Activated CD4-positive, alpha-beta memory T cell treated with anti-CD3 and anti-CD28 coated beads for 36 hours (primary cell): ENCODE measurements at regions of chr9 and their contacts with region 1.

Region 1: GRCh38 chr9:19102631-19103345 is at the start of gene HAUS6:
- DNase-seq: peak; percentile 97
- H3K4me3 Mint-ChIP-seq: peak within 1 kb of the TSS; percentile 95
- H3K27ac Mint-ChIP-seq: peak within 1 kb of the TSS; percentile 93
- H3K4me1 Mint-ChIP-seq: peaks cover 22% of the 10 kb centered on the region
- H3K27me3 Mint-ChIP-seq: no peaks in the 10 kb centered on the region
- total RNA-seq, gene HAUS6: 28.7 to 29.8 TPM

Region 2: GRCh38 chr9:19127881-19128500 is 25.2 kb after region 1 on chr9:
- CTCF ChIA-PET with region 1: interaction called, 5 read pairs
- POLR2A ChIA-PET with region 1: interaction called, 5 read pairs
- intact Hi-C with region 1: loop called (anchors 1 kb)
- DNase-seq: peak; percentile 48
- H3K4me3 Mint-ChIP-seq: peak overlapping the region; percentile 93
- H3K27ac Mint-ChIP-seq: peak overlapping the region; percentile 97
- H3K4me1 Mint-ChIP-seq: peaks cover 56% of the 10 kb centered on the region
- H3K27me3 Mint-ChIP-seq: no peaks in the 10 kb centered on the region

Region 3: GRCh38 chr9:19174127-19174912 is 71.5 kb after region 1 on chr9:
- CTCF ChIA-PET with region 1: interaction called, 8 read pairs
- POLR2A ChIA-PET with region 1: interaction called, 4 read pairs
- intact Hi-C with region 1: loop called (anchors 1 kb)
- DNase-seq: peak; percentile 79
- H3K4me3 Mint-ChIP-seq: no peak overlapping the region
- H3K27ac Mint-ChIP-seq: no peak overlapping the region
- H3K4me1 Mint-ChIP-seq: peaks cover 22% of the 10 kb centered on the region
- H3K27me3 Mint-ChIP-seq: no peaks in the 10 kb centered on the region

Region 4: DNA sequence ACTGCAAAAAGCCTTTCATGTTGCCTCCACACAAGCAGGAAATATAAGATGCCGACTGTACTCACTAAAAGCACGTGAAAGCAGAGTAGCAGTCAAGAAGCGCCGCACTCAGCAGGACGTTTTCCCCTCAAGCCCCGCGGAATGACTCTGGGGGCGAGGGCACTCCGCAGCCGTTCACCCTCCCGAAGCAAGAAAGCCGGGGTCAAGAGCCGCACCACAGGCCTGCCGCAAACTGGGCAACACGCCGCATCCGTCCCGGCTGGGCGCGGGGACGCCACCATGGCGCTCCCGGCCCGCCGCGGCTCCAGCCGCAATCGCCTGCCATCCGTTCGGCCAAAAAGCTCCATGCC is 276.9 kb after region 1 on chr9:
- CTCF ChIA-PET with region 1: no interaction called
- POLR2A ChIA-PET with region 1: interaction called, 7 read pairs
- intact Hi-C with region 1: loop called (anchors 1 kb)
- DNase-seq: no peak
- H3K4me3 Mint-ChIP-seq: peak overlapping the region; percentile 100
- H3K27ac Mint-ChIP-seq: peak overlapping the region; percentile 100
- H3K4me1 Mint-ChIP-seq: peaks cover 50% of the 10 kb centered on the region
- H3K27me3 Mint-ChIP-seq: peaks cover 3% of the 10 kb centered on the region